Transverse colon (tissue), 4 donors: ENCODE measurements at regions of chr19 and their contacts with region 1.

Region 1: GRCh38 chr19:30148039-30148790 is 206.2 kb downstream of the URI1 start:
- DNase-seq: no peak
- H3K4me3 ChIP-seq: no peak overlapping the region
- H3K27ac ChIP-seq: no peak overlapping the region
- H3K4me1 ChIP-seq: no peaks in the 10 kb centered on the region
- H3K27me3 ChIP-seq: peaks cover 16% of the 10 kb centered on the region
- CTCF ChIP-seq: no peak
- EP300 ChIP-seq: no peak
- POLR2A ChIP-seq: no peak

Region 2: DNA sequence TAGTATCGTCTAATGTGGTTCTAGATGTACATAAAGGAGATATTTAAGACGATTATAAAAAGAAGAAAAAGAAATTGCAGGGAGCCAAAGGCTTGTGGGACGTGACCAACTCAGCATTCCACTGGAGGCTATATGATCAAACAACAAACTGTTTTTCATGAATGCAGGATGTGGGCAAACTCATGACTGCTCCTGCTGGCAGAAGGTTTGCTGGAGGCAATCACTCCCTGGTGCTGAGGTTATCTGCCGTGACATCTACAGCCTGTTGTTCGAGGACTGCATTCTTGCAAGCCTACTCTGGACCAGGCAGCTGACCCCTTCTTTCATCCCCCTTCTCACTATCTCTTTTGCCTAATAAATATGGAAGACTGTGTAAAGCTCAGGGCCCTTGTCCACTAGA is 1453.4 kb before region 1 on chr19:
- in situ Hi-C with region 1: no loop called
- intact Hi-C with region 1: loop called (anchors 5 kb)
- DNase-seq: no peak
- H3K4me3 ChIP-seq: no peak overlapping the region
- H3K27ac ChIP-seq: no peak overlapping the region
- H3K4me1 ChIP-seq: no peaks in the 10 kb centered on the region
- H3K27me3 ChIP-seq: no peaks in the 10 kb centered on the region
- CTCF ChIP-seq: no peak
- EP300 ChIP-seq: no peak
- POLR2A ChIP-seq: no peak

Region 3: GRCh38 chr19:30293051-30293785 is 145.0 kb after region 1 on chr19:
- in situ Hi-C with region 1: no loop called
- intact Hi-C with region 1: no loop called
- DNase-seq: no peak
- H3K4me3 ChIP-seq: no peak overlapping the region
- H3K27ac ChIP-seq: no peak overlapping the region
- H3K4me1 ChIP-seq: no peaks in the 10 kb centered on the region
- H3K27me3 ChIP-seq: no peaks in the 10 kb centered on the region
- CTCF ChIP-seq: no peak
- EP300 ChIP-seq: no peak
- POLR2A ChIP-seq: no peak